ENCODE measurements at regions of chr7 and their contacts with region 1.

Region 1: DNA sequence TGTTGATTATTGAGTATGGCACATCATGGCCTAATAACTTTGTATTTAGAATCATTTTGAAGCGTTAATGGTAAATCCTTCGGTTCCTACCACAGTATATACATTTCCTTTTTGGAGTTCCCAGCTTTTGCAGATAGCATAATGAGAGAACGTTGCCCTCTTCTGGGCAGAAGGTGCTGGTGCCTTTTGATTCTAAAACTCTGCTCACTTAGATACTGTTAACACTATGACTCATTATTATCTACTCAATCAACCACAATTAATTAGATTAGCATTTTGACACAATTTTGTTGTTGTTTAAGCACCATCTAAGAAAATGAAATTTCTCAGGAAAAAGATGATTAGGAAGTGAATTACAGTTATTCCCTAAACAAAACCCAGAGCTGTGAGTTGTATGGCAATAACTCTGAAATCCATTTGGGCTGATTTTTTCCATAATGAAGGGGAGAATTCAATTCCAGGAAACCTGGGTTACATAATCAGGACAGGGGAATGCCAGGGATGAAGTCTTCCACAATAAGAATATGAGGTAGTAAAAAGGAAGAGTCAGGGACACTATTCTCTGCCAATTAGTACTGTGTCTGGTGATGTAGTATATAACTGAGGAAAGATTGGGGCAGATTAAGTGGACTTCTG is 11.5 kb upstream of the DLD start:
- DNase-seq: no peak
- ATAC-seq: peak; percentile 80

Region 2: DNA sequence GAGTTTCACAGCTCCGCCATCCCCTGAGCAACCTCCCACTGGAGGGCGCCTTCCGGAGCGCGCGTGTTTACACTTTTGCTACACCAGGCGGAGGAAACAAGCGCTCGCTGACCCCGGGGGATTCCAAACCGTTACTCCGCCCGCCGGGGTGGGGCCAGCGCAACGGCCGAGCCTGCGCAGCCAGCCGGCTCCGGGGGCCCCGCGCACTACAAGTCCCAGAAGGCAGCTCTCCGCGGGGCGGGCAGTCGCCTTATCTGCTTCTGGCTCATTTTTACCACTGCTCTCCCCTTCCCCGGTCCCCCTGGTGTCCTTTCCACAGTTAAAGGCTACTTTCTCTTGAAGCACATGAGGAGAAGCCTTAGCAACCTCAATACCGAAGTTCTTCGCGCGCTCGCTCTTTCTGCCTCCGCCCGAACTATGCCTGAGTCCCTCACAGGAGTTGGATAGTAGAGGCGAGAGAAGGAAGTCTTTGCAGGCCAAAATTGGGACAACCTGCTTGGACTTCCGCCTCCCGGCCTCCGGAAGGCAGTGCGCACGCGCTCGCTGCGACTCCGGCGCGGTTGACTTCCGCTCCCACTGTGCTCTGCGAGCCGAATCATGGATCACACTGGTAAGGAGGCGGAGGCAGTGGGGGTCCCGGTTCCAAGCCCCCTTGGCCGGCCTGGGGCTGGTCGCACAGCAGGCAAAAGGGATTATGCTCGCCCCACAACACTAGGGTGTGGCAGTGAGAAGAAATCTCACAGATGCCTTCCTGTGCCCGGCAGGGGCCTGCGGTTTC is 135.8 kb before region 1 on chr7 and contains the start of gene CBLL1:
- intact Hi-C with region 1: loop called (anchors 10 kb)
- DNase-seq: peak; percentile 98
- ATAC-seq: peak; percentile 99
- total RNA-seq, gene CBLL1: 18.9 TPM

Region 3: DNA sequence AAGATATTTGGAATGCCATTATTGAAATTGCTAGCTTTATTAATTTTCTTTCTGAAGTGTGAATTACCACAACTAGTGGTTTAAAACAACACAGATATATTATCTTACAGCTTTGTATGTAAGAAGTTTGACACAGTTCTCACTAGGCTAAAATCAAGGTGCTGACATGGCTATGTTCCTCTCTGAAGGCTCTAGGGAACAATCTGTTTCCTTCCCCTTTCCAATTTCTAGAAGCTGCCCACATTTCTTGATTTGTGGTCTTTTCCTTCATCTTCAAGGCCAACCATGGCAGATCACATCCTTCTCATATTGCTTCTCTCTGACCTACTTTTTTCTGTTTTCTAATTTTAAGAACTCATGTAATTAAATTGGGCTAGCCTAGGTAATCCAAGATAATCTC is 33.2 kb before region 1 on chr7:
- intact Hi-C with region 1: no loop called
- DNase-seq: no peak
- ATAC-seq: peak; percentile 50

Measured in Right ventricle myocardium superior (tissue), 1 donor.